B cell (primary cell): ENCODE measurements at regions of chr9 and their contacts with region 1.

Region 1: DNA sequence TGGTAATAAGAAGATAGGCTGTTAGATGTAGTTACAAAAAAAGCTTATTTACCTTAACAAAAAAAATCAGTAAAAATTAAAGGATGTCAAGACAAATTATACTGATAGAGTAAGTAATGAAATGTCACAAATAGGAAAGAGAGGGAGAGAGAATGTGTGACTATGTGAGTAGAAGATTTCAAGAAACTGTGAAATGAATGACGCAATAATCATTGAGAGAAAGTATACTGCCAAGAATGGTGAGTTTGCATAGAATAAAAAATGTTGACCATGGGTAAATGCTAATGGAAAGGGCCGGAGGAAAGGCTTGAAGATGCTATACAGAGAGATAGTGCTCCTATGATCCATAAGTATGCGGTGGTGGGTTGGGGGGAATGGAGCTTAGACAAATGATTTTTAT is 100.7 kb downstream of the PTPRD start:
- DNase-seq: no peak
- ATAC-seq: no peak
- H3K4me3 ChIP-seq: no peak overlapping the region
- H3K4me3 Mint-ChIP-seq: no peak overlapping the region
- H3K27ac ChIP-seq: no peak overlapping the region
- H3K27ac Mint-ChIP-seq: no peak overlapping the region
- H3K4me1 ChIP-seq: no peaks in the 10 kb centered on the region
- H3K4me1 Mint-ChIP-seq: no peaks in the 10 kb centered on the region
- H3K27me3 ChIP-seq: no peaks in the 10 kb centered on the region
- H3K27me3 Mint-ChIP-seq: no peaks in the 10 kb centered on the region
- CTCF ChIP-seq: no peak

Region 2: GRCh38 chr9:10525972-10526371 is 13.8 kb after region 1 on chr9:
- CTCF ChIA-PET with region 1: no interaction called
- POLR2A ChIA-PET with region 1: no interaction called
- intact Hi-C with region 1: no loop called
- DNase-seq: no peak
- ATAC-seq: no peak
- H3K4me3 ChIP-seq: no peak overlapping the region
- H3K4me3 Mint-ChIP-seq: no peak overlapping the region
- H3K27ac ChIP-seq: no peak overlapping the region
- H3K27ac Mint-ChIP-seq: no peak overlapping the region
- H3K4me1 ChIP-seq: no peaks in the 10 kb centered on the region
- H3K4me1 Mint-ChIP-seq: no peaks in the 10 kb centered on the region
- H3K27me3 ChIP-seq: no peaks in the 10 kb centered on the region
- H3K27me3 Mint-ChIP-seq: no peaks in the 10 kb centered on the region
- CTCF ChIP-seq: no peak

Region 3: GRCh38 chr9:10764481-10764880 is 252.3 kb after region 1 on chr9:
- CTCF ChIA-PET with region 1: no interaction called
- POLR2A ChIA-PET with region 1: no interaction called
- intact Hi-C with region 1: loop called (anchors 5 kb)
- DNase-seq: no peak
- ATAC-seq: no peak
- H3K4me3 ChIP-seq: no peak overlapping the region
- H3K4me3 Mint-ChIP-seq: no peak overlapping the region
- H3K27ac ChIP-seq: no peak overlapping the region
- H3K27ac Mint-ChIP-seq: no peak overlapping the region
- H3K4me1 ChIP-seq: no peaks in the 10 kb centered on the region
- H3K4me1 Mint-ChIP-seq: no peaks in the 10 kb centered on the region
- H3K27me3 ChIP-seq: no peaks in the 10 kb centered on the region
- H3K27me3 Mint-ChIP-seq: no peaks in the 10 kb centered on the region
- CTCF ChIP-seq: no peak

Region 4: GRCh38 chr9:11868795-11869194 is 1356.7 kb after region 1 on chr9:
- CTCF ChIA-PET with region 1: no interaction called
- POLR2A ChIA-PET with region 1: no interaction called
- intact Hi-C with region 1: no loop called
- DNase-seq: no peak
- ATAC-seq: no peak
- H3K4me3 ChIP-seq: no peak overlapping the region
- H3K4me3 Mint-ChIP-seq: no peak overlapping the region
- H3K27ac ChIP-seq: no peak overlapping the region
- H3K27ac Mint-ChIP-seq: no peak overlapping the region
- H3K4me1 ChIP-seq: no peaks in the 10 kb centered on the region
- H3K4me1 Mint-ChIP-seq: no peaks in the 10 kb centered on the region
- H3K27me3 ChIP-seq: no peaks in the 10 kb centered on the region
- H3K27me3 Mint-ChIP-seq: no peaks in the 10 kb centered on the region
- CTCF ChIP-seq: no peak